ENCODE measurements at regions of chr9 and their contacts with region 1.

Region 1: DNA sequence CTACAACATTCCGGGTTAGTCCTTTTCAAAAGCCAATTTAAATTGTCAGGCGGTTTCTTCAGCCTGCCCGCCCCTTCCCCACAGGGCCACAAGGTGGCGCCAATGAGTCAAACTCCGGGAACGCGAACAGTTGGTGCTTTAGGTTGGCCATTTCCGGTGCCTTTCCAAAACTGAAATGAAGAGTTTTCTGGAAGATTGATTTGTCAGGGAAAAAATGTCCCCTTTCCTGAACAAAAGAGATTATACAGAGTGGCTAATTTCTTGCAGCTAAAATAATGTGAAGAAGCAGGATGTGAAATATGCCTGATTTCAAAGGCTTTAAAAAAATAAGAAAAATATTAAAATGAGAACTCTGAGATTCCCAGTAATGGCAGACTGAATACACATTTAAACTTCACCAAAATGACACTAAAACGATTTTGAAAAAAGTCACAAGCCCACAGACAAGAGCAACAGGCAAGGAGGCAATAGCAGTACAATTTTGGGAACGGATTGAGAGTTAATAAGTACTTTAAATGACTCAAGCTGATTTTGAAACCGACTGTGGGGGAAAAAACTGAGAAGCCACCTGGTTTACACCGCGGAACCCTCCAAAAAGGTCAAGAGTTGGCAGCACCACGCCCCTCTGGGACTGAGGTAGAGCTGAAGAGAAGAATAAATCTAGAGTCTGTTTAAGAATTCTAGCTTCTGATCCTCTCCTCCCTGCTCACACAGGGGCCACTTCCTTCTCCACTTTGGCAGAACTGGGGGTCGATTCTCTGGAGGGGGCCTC is 45.7 kb downstream of the SLC46A2 start:
- DNase-seq: peak; percentile 51
- ATAC-seq: peak; percentile 93
- H3K4me3 ChIP-seq: no peak overlapping the region
- H3K27ac ChIP-seq: no peak overlapping the region
- H3K4me1 ChIP-seq: peaks cover 0 to 9% of the 10 kb centered on the region in 2 experiments; a peak in 2 of 4 replicates
- H3K27me3 ChIP-seq: no peaks in the 10 kb centered on the region
- CTCF ChIP-seq: peak; percentile 94 to 98 (median 98)
- POLR2A ChIP-seq: no peak
- RAD21 ChIP-seq: peak; percentile 85

Region 2: DNA sequence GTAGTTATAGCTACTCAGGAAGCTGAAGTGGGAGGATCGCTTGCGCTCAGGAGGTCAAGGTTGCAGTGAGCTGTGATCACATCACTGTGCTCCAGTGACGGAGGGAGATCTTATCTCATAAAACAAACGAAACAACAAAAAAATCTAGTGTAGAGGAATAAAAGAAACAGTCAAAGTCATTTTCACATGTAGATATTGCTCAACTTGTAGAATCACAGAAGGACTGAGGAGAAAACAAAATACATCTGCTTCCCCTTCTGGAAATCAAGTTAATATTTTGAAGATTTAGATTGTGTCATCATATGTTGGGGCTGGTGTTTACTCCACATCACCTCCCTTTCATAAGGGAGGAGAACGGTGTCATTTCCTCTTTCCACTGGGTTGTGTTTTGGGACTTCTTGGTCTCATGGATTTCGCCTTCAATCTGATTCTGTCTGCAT is 53.9 kb after region 1 on chr9:
- CTCF ChIA-PET with region 1: interaction called, 9 read pairs
- POLR2A ChIA-PET with region 1: no interaction called
- RAD21 ChIA-PET with region 1: no interaction called
- intact Hi-C with region 1: loop called (anchors 1 kb)
- DNase-seq: no peak
- ATAC-seq: no peak
- H3K4me3 ChIP-seq: no peak overlapping the region
- H3K27ac ChIP-seq: no peak overlapping the region
- H3K4me1 ChIP-seq: 0 out of 4 replicates have a peak, but pooled peaks cover 0 to 2% of the 10 kb centered on the region in 2 experiments
- H3K27me3 ChIP-seq: 0 out of 2 replicates have a peak, but pooled peaks cover 3% of the 10 kb centered on the region
- CTCF ChIP-seq: no peak
- POLR2A ChIP-seq: no peak
- RAD21 ChIP-seq: no peak

Region 3: DNA sequence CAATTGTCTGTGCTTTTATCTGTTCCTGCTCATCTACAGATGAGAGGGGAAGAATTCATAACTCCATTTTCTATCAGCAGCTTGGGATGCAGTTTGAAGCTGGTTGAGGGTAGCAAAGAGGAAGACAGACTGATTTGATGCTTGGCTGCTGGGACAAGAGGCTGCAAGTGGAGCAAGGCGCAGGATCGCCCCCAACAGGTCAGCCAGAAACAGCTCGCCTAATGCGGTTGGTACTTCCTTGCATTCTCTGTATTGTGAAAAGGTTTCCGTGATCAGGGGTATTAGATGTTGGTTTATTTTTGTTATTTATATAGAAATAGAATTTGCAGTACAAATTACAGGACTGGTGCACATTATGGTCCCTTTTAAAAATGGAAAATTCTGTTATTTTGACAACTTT is 126.5 kb after region 1 on chr9:
- CTCF ChIA-PET with region 1: no interaction called
- POLR2A ChIA-PET with region 1: no interaction called
- RAD21 ChIA-PET with region 1: no interaction called
- intact Hi-C with region 1: loop called (anchors 2 kb)
- DNase-seq: peak; percentile 29
- ATAC-seq: peak; percentile 78
- H3K4me3 ChIP-seq: no peak overlapping the region
- H3K27ac ChIP-seq: no peak overlapping the region
- H3K4me1 ChIP-seq: no peaks in the 10 kb centered on the region
- H3K27me3 ChIP-seq: no peaks in the 10 kb centered on the region
- CTCF ChIP-seq: peak; percentile 31 to 69 (median 61); a peak in 4 of 6 replicates
- POLR2A ChIP-seq: no peak
- RAD21 ChIP-seq: peak; percentile 63